Activated CD4-positive, alpha-beta memory T cell treated with anti-CD3 and anti-CD28 coated beads for 36 hours (primary cell): ENCODE measurements at regions of chr20 and their contacts with region 1.

Region 1: DNA sequence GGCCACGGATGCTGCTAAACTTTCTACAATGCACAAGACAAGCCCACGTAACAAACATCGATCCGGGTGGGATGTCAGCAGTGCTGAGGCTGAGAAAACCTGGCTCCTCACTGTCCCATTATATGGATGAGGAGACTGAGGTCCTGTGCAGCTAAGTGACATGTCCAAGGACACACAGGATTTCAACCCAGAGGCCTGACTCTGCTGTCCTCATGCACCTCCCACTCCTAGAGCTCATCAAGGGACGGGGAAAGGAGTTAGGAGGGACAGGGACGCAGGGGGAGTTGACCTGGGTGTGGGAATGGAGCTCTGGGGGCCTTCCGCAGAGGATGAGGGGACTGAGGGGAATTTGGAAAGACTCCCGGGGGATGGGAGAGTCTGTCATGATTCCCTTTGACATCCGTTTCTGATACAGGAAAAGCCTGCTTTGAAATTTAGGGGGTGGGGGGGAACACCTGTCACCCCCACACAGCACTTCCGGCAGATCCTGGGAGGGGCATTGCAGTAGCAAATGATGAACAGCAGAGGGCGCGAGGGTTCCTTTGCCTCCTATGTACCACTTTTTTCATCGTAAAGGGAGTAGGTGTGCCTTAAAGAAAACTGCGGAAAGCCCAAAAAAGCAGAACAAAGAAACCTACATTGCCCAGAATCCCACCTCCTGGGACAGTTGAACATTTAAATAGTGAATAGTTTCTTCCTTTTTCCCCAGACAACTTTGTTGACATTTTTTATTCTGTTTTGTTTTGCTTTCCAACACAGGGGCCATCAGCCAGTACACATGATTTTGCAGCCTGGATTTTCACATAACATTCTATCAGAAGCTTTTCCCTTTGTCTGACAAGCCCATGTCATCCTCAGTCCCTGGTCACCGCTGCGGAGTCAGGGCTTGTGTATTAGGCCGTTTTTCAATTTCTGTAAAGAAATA is 48.6 kb downstream of the SLC2A10 start:
- DNase-seq: peak; percentile 73
- H3K4me3 Mint-ChIP-seq: no peak overlapping the region
- H3K27ac Mint-ChIP-seq: no peak overlapping the region
- H3K4me1 Mint-ChIP-seq: no peaks in the 10 kb centered on the region
- H3K27me3 Mint-ChIP-seq: peaks cover 8% of the 10 kb centered on the region

Region 2: GRCh38 chr20:47024461-47024937 is 266.5 kb after region 1 on chr20:
- CTCF ChIA-PET with region 1: interaction called, 4 read pairs
- POLR2A ChIA-PET with region 1: no interaction called
- intact Hi-C with region 1: loop called (anchors 10 kb)
- DNase-seq: no peak
- H3K4me3 Mint-ChIP-seq: no peak overlapping the region
- H3K27ac Mint-ChIP-seq: no peak overlapping the region
- H3K4me1 Mint-ChIP-seq: no peaks in the 10 kb centered on the region
- H3K27me3 Mint-ChIP-seq: peaks cover 1% of the 10 kb centered on the region